Endothelial cell of umbilical vein (primary cell): ENCODE measurements at regions of chr7 and their contacts with region 1.

Region 1: DNA sequence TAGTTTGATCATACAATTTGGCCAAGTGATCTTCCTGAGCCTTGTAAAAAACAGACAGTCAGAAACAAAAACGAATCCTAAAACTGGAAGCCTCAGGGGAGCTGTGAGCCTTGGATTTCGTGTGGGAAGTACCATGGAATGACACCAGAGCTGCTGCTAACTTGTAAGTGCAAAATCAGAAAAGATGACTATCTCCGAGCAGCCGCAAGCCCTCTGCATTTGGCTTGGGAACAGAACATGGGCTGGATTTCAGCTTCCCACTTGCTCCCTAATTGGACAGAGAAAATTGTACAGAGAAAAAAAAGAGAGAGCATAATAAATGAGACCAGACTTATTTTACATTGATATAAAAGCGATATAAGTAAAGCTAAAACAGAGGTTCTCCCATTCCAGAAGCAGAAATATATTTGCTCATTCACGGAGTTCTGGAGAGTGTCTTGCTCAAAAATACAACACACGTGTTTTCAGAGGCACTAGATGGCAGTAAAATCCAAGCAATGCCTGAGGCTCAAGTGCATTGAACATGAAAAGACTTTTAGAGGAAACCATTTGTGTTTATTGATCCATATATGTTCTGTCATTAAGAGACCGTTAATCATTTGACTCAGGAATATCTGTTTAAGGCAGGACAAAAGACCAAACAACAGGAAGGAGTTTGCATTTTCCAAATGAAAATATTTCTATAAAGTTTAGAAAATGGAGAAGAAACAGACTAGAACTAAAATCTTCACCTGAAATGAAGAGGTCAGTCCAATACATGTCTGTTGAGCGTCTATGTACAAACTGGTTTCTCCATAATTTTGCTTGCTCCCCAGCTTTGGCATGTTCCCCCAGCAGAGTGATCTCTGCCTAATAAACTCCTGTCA is 78.3 kb upstream of the SLC26A5 start:
- DNase-seq: peak; percentile 35
- H3K4me3 ChIP-seq: no peak overlapping the region
- H3K27ac ChIP-seq: no peak overlapping the region
- H3K4me1 ChIP-seq: no peaks in the 10 kb centered on the region
- H3K27me3 ChIP-seq: peaks cover 0 to 5% of the 10 kb centered on the region in 2 experiments
- CTCF ChIP-seq: peak in 1 of 2 donors; percentile 12
- POLR2A ChIP-seq: no peak

Region 2: DNA sequence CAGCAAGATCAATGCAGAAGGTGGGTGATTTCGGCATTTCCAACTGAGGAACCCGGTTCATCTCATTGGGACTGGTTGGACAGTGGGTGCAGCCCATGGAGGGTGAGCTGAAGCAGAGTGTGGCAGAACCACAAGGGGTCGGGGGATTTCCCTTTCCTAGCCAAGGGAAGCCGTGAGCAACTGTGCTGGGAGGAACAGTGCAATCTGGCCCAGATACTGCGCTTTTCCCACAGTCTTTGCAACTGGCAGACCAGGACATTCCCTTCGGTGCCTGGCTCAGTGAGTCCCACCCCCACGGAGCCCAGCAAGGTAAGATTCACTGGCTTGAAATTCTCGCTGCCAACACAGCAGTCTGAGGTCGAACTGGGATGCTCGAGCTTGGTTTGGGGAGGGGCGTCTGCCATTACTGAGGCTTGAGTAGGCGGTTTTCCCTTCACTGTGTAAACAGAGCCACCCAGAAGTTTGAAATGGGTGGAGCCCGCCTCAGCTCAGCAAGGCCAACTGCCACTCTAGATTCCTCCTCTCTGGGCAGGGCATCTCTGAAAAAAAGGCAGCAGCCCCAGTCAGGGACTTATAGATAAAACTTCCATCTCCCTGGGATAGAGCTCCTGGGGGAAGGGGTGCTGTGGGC is 19.7 kb before region 1 on chr7:
- CTCF ChIA-PET with region 1: no interaction called
- POLR2A ChIA-PET with region 1: no interaction called
- dilution Hi-C with region 1: no loop called
- intact Hi-C with region 1: no loop called
- DNase-seq: no peak
- H3K4me3 ChIP-seq: no peak overlapping the region
- H3K27ac ChIP-seq: no peak overlapping the region
- H3K4me1 ChIP-seq: no peaks in the 10 kb centered on the region
- H3K27me3 ChIP-seq: no peaks in the 10 kb centered on the region
- CTCF ChIP-seq: no peak
- POLR2A ChIP-seq: no peak

Region 3: GRCh38 chr7:103781409-103781808 is 257.1 kb after region 1 on chr7:
- CTCF ChIA-PET with region 1: no interaction called
- POLR2A ChIA-PET with region 1: no interaction called
- dilution Hi-C with region 1: no loop called
- intact Hi-C with region 1: no loop called
- DNase-seq: no peak
- H3K4me3 ChIP-seq: no peak overlapping the region
- H3K27ac ChIP-seq: no peak overlapping the region
- H3K4me1 ChIP-seq: no peaks in the 10 kb centered on the region
- H3K27me3 ChIP-seq: peaks cover 1 to 15% of the 10 kb centered on the region in 2 experiments
- CTCF ChIP-seq: no peak
- POLR2A ChIP-seq: no peak

Region 4: DNA sequence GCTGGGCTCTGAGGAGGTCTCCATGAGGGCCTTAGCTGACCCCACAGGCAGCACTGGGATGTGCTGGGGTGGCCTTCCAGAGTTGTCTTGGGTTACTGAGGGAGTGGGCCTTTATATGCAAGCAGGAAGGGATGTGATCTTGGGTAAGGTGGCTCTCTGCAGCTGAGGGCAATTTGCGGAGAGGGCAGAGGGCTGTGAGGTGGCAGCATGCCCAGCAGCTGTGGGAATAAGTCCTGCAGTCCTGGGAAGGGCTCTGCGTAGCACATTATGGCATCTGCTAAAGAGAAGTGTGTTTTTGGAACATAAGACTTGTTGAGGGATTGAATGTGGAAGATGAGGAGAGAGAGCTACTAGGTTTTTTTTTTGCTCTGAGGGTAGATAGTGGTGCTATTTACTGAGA is 1390.1 kb after region 1 on chr7:
- CTCF ChIA-PET with region 1: interaction called, 17 read pairs
- POLR2A ChIA-PET with region 1: no interaction called
- dilution Hi-C with region 1: no loop called
- intact Hi-C with region 1: loop called (anchors 10 kb)
- DNase-seq: no peak
- H3K4me3 ChIP-seq: no peak overlapping the region
- H3K27ac ChIP-seq: no peak overlapping the region
- H3K4me1 ChIP-seq: no peaks in the 10 kb centered on the region
- H3K27me3 ChIP-seq: peaks cover 0 to 8% of the 10 kb centered on the region in 2 experiments
- CTCF ChIP-seq: no peak
- POLR2A ChIP-seq: no peak